Adrenal gland (tissue), 19 donors: ENCODE measurements at regions of chr9 and their contacts with region 1.

Region 1: GRCh38 chr9:132114102-132114707 is 34.5 kb upstream of the MED27 start:
- DNase-seq: peak; percentile 65 to 79 (median 70)
- H3K4me3 ChIP-seq: no peak overlapping the region
- H3K27ac ChIP-seq: no peak overlapping the region
- H3K4me1 ChIP-seq: no peaks in the 10 kb centered on the region
- H3K27me3 ChIP-seq: peaks cover 4% of the 10 kb centered on the region
- CTCF ChIP-seq: no peak
- POLR2A ChIP-seq: no peak

Region 2: GRCh38 chr9:131799177-131799823 is 314.9 kb before region 1 on chr9:
- intact Hi-C with region 1: loop called in 1 of 2 experiments (anchors 10 kb)
- DNase-seq: peak; percentile 34 to 67 (median 55)
- H3K4me3 ChIP-seq: no peak overlapping the region
- H3K27ac ChIP-seq: no peak overlapping the region
- H3K4me1 ChIP-seq: no peaks in the 10 kb centered on the region
- H3K27me3 ChIP-seq: peaks cover 7% of the 10 kb centered on the region
- CTCF ChIP-seq: no peak
- POLR2A ChIP-seq: no peak